Activated CD4-positive, alpha-beta T cell treated with anti-CD3 and anti-CD28 coated beads for 36 hours (primary cell): ENCODE measurements at regions of chr12 and their contacts with region 1.

Region 1: GRCh38 chr12:3885277-3886094 is 12.3 kb upstream of the PARP11 start:
- DNase-seq: peak; percentile 47
- ATAC-seq: peak; percentile 27
- H3K4me3 Mint-ChIP-seq: no peak overlapping the region
- H3K27ac Mint-ChIP-seq: peak overlapping the region; percentile 58
- H3K4me1 Mint-ChIP-seq: peaks cover 7% of the 10 kb centered on the region
- H3K27me3 Mint-ChIP-seq: no peaks in the 10 kb centered on the region

Region 2: GRCh38 chr12:3896801-3897331 is 11.4 kb after region 1 on chr12:
- CTCF ChIA-PET with region 1: interaction called, 35 read pairs
- POLR2A ChIA-PET with region 1: no interaction called
- intact Hi-C with region 1: no loop called
- DNase-seq: no peak
- ATAC-seq: peak; percentile 24
- H3K4me3 Mint-ChIP-seq: peak overlapping the region; percentile 13
- H3K27ac Mint-ChIP-seq: peak overlapping the region; percentile 81
- H3K4me1 Mint-ChIP-seq: peaks cover 45% of the 10 kb centered on the region
- H3K27me3 Mint-ChIP-seq: no peaks in the 10 kb centered on the region

Region 3: DNA sequence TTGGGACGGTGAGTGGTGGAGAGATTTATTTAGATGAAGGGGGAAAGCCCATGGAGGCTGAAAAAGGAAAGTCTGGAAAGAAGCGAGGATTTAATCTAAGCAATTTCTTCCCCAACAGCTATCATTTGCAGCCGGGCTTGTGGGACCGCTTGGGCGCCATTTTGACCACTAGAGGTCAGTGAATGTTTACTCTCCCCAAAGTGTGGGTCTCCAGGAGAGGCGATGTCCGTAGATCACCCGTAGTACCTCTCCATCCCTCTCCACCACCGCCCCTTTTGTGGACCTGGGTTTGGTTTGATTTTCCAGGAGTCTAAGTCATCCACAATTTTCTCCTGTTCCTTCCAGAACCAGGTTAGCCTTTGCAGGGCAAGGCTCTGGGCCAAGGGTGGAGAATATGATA is 79.0 kb after region 1 on chr12:
- CTCF ChIA-PET with region 1: interaction called, 37 read pairs
- POLR2A ChIA-PET with region 1: no interaction called
- intact Hi-C with region 1: loop called (anchors 1 kb)
- DNase-seq: peak; percentile 47
- ATAC-seq: no peak
- H3K4me3 Mint-ChIP-seq: no peak overlapping the region
- H3K27ac Mint-ChIP-seq: no peak overlapping the region
- H3K4me1 Mint-ChIP-seq: peaks cover 18% of the 10 kb centered on the region
- H3K27me3 Mint-ChIP-seq: no peaks in the 10 kb centered on the region

Region 4: DNA sequence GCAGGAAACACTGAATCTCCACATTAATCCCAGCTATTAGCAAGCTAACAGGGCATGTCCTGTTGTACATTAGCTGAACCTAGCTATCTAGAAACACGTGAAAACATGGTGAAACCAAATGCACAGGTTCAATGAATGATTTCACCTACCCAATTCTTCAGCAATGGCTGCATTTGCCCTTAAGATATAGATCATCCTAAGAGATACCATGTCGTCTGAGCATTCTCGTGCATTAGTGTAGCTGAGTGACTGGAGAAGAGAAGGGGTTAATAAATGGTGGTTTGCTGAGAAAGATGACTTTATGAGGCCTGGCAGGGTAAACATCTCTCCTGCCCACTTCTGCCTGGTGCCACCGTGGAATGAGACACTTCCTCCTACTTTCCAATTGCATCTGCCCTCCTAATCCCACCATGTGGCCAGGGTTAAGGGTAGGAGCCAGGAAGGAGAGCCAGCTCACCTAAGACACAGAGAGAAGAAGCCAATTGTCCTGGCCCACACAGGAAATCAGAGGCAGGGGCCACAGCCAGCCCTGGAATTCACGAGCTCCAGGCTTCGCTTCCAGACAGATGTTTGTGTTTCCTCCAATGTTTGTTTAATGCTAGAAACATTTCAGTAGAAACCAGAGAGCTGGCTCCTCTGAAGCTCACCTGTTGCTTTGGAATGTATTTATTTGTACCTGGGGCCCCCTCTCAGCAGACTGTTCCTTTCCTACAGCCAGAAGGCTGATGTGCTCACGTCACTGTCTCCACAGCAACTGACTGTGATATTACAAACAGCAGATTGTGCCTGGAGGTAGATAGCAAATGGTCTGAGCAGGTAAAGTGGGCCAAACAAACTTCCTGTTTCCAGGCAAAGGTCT is 113.7 kb after region 1 on chr12:
- CTCF ChIA-PET with region 1: interaction called, 33 read pairs
- POLR2A ChIA-PET with region 1: no interaction called
- intact Hi-C with region 1: loop called in 1 of 2 experiments (anchors 1 kb)
- DNase-seq: no peak
- ATAC-seq: no peak
- H3K4me3 Mint-ChIP-seq: no peak overlapping the region
- H3K27ac Mint-ChIP-seq: no peak overlapping the region
- H3K4me1 Mint-ChIP-seq: peaks cover 16% of the 10 kb centered on the region
- H3K27me3 Mint-ChIP-seq: no peaks in the 10 kb centered on the region

Region 5: GRCh38 chr12:4037747-4038312 is 152.3 kb after region 1 on chr12:
- CTCF ChIA-PET with region 1: interaction called, 36 read pairs
- POLR2A ChIA-PET with region 1: no interaction called
- intact Hi-C with region 1: loop called (anchors 1 kb)
- DNase-seq: peak; percentile 35
- ATAC-seq: no peak
- H3K4me3 Mint-ChIP-seq: no peak overlapping the region
- H3K27ac Mint-ChIP-seq: no peak overlapping the region
- H3K4me1 Mint-ChIP-seq: peaks cover 5% of the 10 kb centered on the region
- H3K27me3 Mint-ChIP-seq: no peaks in the 10 kb centered on the region

Region 6: DNA sequence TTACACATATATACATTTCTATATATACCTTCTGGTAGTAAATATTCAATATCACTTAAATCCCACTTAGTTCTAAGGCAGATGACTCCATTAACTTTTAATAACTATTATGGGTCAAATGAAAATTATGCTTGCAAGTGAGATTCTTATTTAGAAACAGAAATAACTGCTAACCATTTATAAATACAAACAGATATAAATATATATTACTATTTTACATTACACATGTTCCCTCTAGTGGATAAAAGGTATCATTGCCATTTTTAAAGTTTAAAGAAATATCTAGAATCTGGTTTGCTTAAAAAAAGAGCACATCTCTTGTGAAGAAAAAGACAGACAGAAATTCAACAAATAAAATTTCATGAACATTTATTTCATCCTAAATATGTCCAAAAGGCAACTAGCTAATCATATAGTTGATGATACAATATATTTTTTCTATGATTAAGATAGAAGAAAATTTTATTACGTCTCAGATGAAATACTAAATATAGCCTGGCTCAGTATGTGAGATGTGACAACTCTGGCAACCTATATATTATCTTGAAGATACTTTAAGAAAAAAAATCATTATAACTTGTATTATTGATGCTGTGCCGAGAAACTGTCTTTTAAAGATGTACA is 641.5 kb after region 1 on chr12:
- CTCF ChIA-PET with region 1: no interaction called
- POLR2A ChIA-PET with region 1: no interaction called
- intact Hi-C with region 1: loop called in 1 of 2 experiments (anchors 5 kb)
- DNase-seq: no peak
- ATAC-seq: no peak
- H3K4me3 Mint-ChIP-seq: no peak overlapping the region
- H3K27ac Mint-ChIP-seq: no peak overlapping the region
- H3K4me1 Mint-ChIP-seq: peaks cover 5% of the 10 kb centered on the region
- H3K27me3 Mint-ChIP-seq: no peaks in the 10 kb centered on the region